ENCODE measurements at regions of chr18 and their contacts with region 1.

Region 1: DNA sequence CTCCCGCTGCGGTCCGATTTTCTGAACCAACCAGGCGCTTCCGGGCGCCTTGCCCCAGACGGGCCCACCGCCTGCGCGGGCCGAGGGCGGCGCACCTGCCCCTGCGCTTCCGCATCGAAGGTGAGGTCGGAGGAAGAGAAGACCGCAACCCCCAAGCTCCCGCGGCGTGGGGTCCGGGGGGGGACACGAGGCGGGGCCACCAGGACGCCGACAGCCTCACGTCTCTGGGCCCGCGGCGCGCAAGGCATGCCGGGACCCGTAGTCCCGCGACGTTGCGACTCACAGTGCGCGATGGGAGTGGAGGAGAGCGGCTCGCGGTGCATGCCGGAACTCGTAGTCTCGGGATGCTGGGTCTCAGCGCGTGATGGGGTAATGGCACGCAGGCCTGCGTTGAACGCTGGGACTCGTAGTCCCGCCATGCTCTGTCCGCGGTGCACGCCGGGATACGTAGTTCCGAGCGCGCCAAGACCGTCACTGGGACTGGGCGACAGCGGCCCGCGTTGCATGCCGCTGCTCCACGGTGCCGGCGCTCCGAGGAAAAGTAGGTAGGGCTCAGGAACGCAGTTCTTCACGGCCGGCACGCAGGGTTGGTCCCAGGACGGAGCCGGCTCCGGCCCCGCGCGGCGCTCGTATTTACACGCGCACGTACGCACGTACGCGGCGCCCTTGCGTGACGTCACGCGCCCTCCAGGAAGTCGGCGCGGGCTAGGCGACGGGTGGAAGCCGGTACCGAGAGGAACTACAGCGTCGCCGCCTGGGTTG is at the start of gene CTDP1:
- DNase-seq: peak; percentile 99
- H3K4me3 Mint-ChIP-seq: peak within 1 kb of the TSS; percentile 93
- H3K27ac Mint-ChIP-seq: peak within 1 kb of the TSS; percentile 99
- H3K4me1 Mint-ChIP-seq: peaks cover 56% of the 10 kb centered on the region
- H3K27me3 Mint-ChIP-seq: peaks cover 4% of the 10 kb centered on the region
- total RNA-seq, gene CTDP1: 41.2 and 45.5 TPM in 2 replicates

Region 2: DNA sequence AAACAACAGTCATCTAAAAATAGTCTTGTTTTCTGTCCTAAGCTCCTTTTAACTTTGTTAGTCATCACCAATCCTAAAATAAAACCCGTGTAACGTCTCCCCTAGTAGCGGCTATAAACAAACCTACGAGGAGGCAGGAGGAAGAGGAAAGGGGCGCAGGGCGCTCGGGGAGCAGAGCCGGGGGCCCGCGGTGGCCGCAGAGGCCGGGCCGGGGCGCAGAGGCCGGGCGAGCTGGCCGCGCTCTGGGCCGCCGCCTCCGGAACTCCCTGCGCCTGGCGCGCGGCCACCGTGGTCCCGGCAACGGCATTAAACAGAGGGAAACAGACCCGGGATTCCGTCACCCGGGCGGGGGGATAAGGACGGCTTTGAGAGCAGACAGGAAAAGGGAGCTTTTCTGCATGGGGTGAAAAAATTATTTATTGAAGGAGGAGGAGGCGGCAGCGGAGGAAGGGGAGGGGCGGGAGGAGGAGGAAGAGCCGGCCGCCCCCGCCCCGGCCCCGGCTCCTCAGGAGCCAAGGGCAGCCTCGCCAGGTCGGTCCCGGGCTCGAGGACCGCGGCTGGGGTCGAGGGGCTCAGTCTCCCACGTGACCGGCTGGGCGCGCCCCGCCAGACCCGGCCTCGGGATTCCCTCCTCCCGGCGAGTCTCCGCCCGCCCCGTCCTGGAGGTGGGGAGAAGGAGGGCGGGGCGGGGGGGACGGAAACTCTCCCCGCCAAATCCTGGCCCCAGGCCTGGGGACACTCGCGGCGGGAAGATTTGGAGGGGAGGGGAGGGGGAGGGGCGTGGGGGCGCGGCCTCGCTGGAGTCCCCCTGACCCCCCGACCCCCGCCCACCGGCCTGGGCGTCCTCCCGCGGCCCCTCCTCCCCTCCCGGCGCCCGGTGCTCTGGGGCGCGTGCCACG is 285.4 kb before region 1 on chr18:
- intact Hi-C with region 1: loop called (anchors 1 kb)
- DNase-seq: peak; percentile 83
- H3K4me3 Mint-ChIP-seq: peak overlapping the region; percentile 87
- H3K27ac Mint-ChIP-seq: peak overlapping the region; percentile 92
- H3K4me1 Mint-ChIP-seq: peaks cover 19% of the 10 kb centered on the region
- H3K27me3 Mint-ChIP-seq: peaks cover 27% of the 10 kb centered on the region

Region 3: DNA sequence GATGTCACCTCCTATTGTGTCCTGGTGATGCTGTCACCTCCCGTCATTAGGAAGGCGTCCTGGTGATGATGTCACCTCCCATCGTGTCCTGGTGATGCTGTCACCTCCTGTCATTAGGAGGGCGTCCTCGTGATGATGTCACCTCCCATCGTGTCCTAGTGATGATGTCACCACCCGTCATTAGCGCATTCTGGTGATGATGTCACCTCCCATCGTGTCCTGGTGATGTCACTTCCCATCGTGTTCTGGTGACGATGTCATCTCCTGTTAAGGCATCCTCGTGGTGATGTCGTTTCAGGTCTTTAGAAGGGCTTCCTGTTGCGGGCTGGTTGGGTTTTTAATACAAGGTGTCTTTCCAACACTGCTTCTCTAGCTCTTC is 41.1 kb after region 1 on chr18:
- intact Hi-C with region 1: no loop called
- DNase-seq: peak; percentile 60
- H3K4me3 Mint-ChIP-seq: no peak overlapping the region
- H3K27ac Mint-ChIP-seq: no peak overlapping the region
- H3K4me1 Mint-ChIP-seq: peaks cover 9% of the 10 kb centered on the region
- H3K27me3 Mint-ChIP-seq: no peaks in the 10 kb centered on the region

Region 4: GRCh38 chr18:79988451-79989194 is 309.3 kb after region 1 on chr18 and contains the start of gene TXNL4A:
- intact Hi-C with region 1: loop called (anchors 1 kb)
- DNase-seq: peak; percentile 96
- H3K4me3 Mint-ChIP-seq: peak within 1 kb of the TSS; percentile 88
- H3K27ac Mint-ChIP-seq: peak within 1 kb of the TSS; percentile 94
- H3K4me1 Mint-ChIP-seq: peaks cover 32% of the 10 kb centered on the region
- H3K27me3 Mint-ChIP-seq: no peaks in the 10 kb centered on the region
- total RNA-seq, gene TXNL4A: 198 and 210 TPM in 2 replicates

Region 5: GRCh38 chr18:80108728-80109675 is 429.7 kb after region 1 on chr18 and contains the start of gene ADNP2:
- intact Hi-C with region 1: loop called (anchors 1 kb)
- DNase-seq: peak; percentile 96
- H3K4me3 Mint-ChIP-seq: peak within 1 kb of the TSS; percentile 85
- H3K27ac Mint-ChIP-seq: peak within 1 kb of the TSS; percentile 88
- H3K4me1 Mint-ChIP-seq: peaks cover 24% of the 10 kb centered on the region
- H3K27me3 Mint-ChIP-seq: no peaks in the 10 kb centered on the region
- total RNA-seq, gene ADNP2: 29.3 and 29.8 TPM in 2 replicates

Region 6: DNA sequence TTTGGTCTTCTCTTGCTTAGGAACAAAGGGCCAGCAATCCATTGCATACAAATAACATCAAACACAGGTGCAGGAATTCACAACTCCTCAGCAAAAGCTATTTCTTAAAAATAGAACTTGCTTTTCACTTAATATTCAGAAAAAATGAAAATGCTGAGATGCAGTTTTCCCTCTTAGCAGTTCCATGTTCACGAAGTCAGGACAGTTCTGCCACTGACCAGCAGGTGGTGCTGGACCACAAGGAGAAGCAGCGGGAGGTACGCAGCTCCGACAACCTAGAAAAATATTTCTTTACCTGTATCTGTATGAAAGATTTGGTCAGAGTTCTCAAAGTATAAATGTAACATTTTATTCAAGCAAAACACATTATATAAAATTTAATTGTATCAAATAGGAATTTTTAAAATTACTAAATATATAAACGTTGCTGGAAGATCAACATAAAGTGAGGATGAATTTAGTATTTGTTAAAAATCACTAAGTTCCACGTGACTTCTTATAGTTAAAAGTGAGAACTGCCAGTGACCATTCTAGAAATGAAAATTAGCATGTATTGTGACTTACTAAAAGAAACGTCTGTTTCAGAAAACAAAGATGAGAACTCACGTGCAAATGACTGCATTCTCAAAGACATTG is 478.5 kb after region 1 on chr18:
- intact Hi-C with region 1: no loop called
- DNase-seq: peak; percentile 91
- H3K4me3 Mint-ChIP-seq: no peak overlapping the region
- H3K27ac Mint-ChIP-seq: no peak overlapping the region
- H3K4me1 Mint-ChIP-seq: no peaks in the 10 kb centered on the region
- H3K27me3 Mint-ChIP-seq: peaks cover 8% of the 10 kb centered on the region

Measured in activated CD4-positive, alpha-beta T cell treated with anti-CD3 and anti-CD28 coated beads, Interleukin-2, amount 10 ng/mL, durations not matched to agents 24 days and 14 days (primary cell).